CD4-positive, alpha-beta memory T cell (primary cell): ENCODE measurements at regions of chr1 and their contacts with region 1.

Region 1: GRCh38 chr1:74733604-74734484 is 892 bp downstream of the TYW3 start:
- DNase-seq: peak; percentile 57 to 75 (median 69)
- H3K4me3 ChIP-seq: peak overlapping the region; percentile 88 to 89
- H3K4me3 Mint-ChIP-seq: peak overlapping the region; percentile 93 to 100 (median 96)
- H3K27ac ChIP-seq: peak overlapping the region; percentile 75
- H3K27ac Mint-ChIP-seq: peak overlapping the region; percentile 85 to 99 (median 96)
- H3K4me1 ChIP-seq: peaks cover 37% of the 10 kb centered on the region
- H3K4me1 Mint-ChIP-seq: peaks cover 33 to 48% (median 41%) of the 10 kb centered on the region in 4 donors
- H3K27me3 ChIP-seq: no peaks in the 10 kb centered on the region
- H3K27me3 Mint-ChIP-seq: no peaks in the 10 kb centered on the region

Region 2: GRCh38 chr1:74197657-74198552 is 535.9 kb before region 1 on chr1 and contains the starts of genes FPGT and LRRIQ3:
- CTCF ChIA-PET with region 1: interaction called, 4 read pairs
- POLR2A ChIA-PET with region 1: interaction called, 15 read pairs
- intact Hi-C with region 1: loop called (anchors 1 kb)
- DNase-seq: peak; percentile 93 to 97 (median 97)
- H3K4me3 ChIP-seq: peak within 1 kb of the TSS; percentile 79 to 92
- H3K4me3 Mint-ChIP-seq: peak within 1 kb of the TSS; percentile 91 to 96 (median 94)
- H3K27ac ChIP-seq: peak within 1 kb of the TSS; percentile 62
- H3K27ac Mint-ChIP-seq: peak within 1 kb of the TSS; percentile 91 to 98 (median 96)
- H3K4me1 ChIP-seq: peaks cover 22% of the 10 kb centered on the region
- H3K4me1 Mint-ChIP-seq: peaks cover 10 to 24% (median 17%) of the 10 kb centered on the region in 4 donors
- H3K27me3 ChIP-seq: no peaks in the 10 kb centered on the region
- H3K27me3 Mint-ChIP-seq: no peaks in the 10 kb centered on the region
- total RNA-seq, gene FPGT: 13.1 to 14.8 TPM
- total RNA-seq, gene LRRIQ3: 2.2 TPM

Region 3: DNA sequence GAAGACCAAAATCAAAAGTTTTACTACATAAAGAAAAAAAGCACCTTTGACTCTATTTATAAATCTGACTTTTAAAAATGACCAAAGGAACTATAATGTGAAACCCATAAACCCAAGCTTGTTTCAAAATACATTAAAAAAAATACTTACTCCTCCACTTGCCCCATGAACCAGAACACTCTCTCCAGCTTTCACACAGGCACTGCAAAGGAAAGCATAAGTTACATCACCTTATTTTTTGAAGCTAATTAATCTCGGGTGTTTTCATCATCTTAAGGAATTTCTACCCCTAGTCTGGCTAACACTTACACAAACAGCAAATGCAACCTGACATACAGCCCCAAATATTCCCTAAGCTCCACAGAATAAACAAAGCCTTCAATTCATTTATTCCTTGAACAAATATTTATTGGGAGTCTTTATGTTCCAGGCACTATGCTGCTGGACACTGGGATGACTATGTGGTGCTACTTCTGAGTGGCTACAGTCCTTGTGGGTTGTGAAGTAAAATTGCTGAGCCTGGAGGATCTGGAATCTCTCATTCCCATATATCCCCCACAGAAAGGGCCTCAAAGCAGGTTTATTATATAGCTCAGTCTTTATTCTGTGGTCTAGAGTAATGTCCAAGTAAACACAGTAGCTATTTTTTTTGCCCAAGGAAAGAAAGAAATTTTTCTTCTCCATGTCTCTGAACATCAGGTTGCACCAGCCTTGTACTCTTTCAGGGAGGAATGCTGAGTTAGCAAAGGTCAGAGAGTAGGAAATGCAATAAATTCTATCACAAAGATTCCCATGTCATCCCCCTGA is 19.2 kb before region 1 on chr1:
- CTCF ChIA-PET with region 1: interaction called, 42 read pairs
- POLR2A ChIA-PET with region 1: no interaction called
- intact Hi-C with region 1: no loop called
- DNase-seq: no peak
- H3K4me3 ChIP-seq: no peak overlapping the region
- H3K4me3 Mint-ChIP-seq: no peak overlapping the region
- H3K27ac ChIP-seq: no peak overlapping the region
- H3K27ac Mint-ChIP-seq: peak overlapping the region in 1 of 7 donors; percentile 43
- H3K4me1 ChIP-seq: no peaks in the 10 kb centered on the region
- H3K4me1 Mint-ChIP-seq: no peaks in the 10 kb centered on the region
- H3K27me3 ChIP-seq: no peaks in the 10 kb centered on the region
- H3K27me3 Mint-ChIP-seq: no peaks in the 10 kb centered on the region

Region 4: GRCh38 chr1:74763807-74764206 is 30.0 kb after region 1 on chr1:
- CTCF ChIA-PET with region 1: interaction called, 8 read pairs
- POLR2A ChIA-PET with region 1: no interaction called
- intact Hi-C with region 1: loop called (anchors 2 kb)
- DNase-seq: no peak
- H3K4me3 ChIP-seq: no peak overlapping the region
- H3K4me3 Mint-ChIP-seq: no peak overlapping the region
- H3K27ac ChIP-seq: no peak overlapping the region
- H3K27ac Mint-ChIP-seq: peak overlapping the region in 5 of 7 donors; percentile 1 to 10 (median 5)
- H3K4me1 ChIP-seq: no peaks in the 10 kb centered on the region
- H3K4me1 Mint-ChIP-seq: peaks cover 6 to 16% (median 11%) of the 10 kb centered on the region in 4 donors
- H3K27me3 ChIP-seq: no peaks in the 10 kb centered on the region
- H3K27me3 Mint-ChIP-seq: no peaks in the 10 kb centered on the region